Activated T-helper 2 cell treated with anti-CD3 and anti-CD28 coated beads, Interferon-gamma antibody, Interleukin-2, Interleukin-4, amounts not matched to agents 10 μg/mL and 5 μg/mL and 100 μg/mL, durations not matched to agents 14 hours and 24 hours and 36 hours (primary cell): ENCODE measurements at regions of chrX and their contacts with region 1.

Region 1: GRCh38 chrX:119118780-119119395 is 8.7 kb downstream of the KIAA1210 start:
- DNase-seq: peak; percentile 17
- H3K4me3 Mint-ChIP-seq: no peak overlapping the region
- H3K27ac Mint-ChIP-seq: no peak overlapping the region
- H3K4me1 Mint-ChIP-seq: no peaks in the 10 kb centered on the region
- H3K27me3 Mint-ChIP-seq: no peaks in the 10 kb centered on the region

Region 2: DNA sequence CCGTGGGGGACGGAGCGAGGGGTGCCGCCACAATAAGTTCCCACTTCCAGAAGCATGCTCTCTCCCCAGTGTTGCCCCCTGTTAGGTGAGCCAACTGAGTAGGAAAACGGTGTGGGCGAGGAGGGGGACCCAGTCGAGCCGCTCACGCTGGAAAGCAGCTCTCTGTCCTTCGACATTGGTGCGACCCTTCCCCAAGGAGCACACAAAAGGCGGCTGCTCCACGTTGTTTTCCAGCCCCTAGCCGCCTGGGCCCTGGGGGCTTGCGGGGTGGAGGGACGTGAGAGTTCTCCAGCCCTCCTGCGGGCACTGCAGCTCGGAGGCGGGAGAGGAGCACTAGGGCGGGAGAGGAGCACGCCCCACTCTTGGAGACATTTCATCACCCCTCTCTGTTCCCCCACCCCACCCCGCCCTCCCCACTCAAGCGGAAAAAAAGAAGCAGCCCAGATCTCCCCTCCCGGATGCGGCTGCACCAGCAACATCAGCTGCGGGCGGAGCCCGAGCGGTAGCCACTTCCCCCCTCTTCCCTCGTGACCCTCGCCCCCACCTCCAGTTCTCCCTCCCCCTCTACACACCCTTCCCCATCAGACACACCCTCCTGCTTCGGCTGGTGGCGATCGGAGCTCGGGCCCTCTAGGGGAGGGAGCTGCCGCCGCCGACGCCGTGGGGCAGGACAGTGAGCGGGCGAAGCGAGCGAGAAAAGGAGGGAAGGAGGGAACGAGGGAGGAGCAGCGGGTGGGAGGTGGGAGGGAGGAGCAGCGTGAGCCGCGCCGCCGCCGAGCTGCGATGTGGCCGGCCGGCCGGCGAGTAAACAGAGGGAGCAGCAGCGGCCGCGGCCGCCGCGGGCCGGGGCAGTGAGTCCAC is 623.6 kb before region 1 on chrX and contains the start of gene DOCK11:
- intact Hi-C with region 1: no loop called
- DNase-seq: peak; percentile 77
- H3K4me3 Mint-ChIP-seq: peak within 1 kb of the TSS; percentile 97
- H3K27ac Mint-ChIP-seq: peak within 1 kb of the TSS; percentile 97
- H3K4me1 Mint-ChIP-seq: peaks cover 26% of the 10 kb centered on the region
- H3K27me3 Mint-ChIP-seq: no peaks in the 10 kb centered on the region
- total RNA-seq, gene DOCK11: 29.9 and 31.8 TPM in 2 replicates

Region 3: DNA sequence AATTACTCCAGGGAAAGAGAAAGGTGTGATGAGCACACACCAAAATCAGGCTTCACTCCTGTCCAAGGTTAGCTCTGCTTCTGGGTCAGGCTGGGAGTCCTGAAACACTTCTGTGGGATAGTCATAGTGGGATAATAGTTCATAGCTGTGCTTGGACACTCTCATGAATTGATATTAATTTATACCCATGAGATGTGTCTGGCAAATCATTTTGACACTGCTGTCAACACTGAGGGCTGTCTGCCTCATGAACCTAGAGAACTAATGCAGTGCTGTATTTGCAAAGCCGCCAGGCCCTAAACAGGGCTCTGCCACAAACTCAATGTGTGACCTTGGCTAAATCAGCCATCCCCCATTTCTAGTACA is 92.7 kb after region 1 on chrX:
- intact Hi-C with region 1: loop called (anchors 5 kb)
- DNase-seq: no peak
- H3K4me3 Mint-ChIP-seq: no peak overlapping the region
- H3K27ac Mint-ChIP-seq: no peak overlapping the region
- H3K4me1 Mint-ChIP-seq: no peaks in the 10 kb centered on the region
- H3K27me3 Mint-ChIP-seq: peaks cover 12% of the 10 kb centered on the region

Region 4: GRCh38 chrX:119266364-119266995 is 147.6 kb after region 1 on chrX:
- intact Hi-C with region 1: loop called (anchors 1 kb)
- DNase-seq: no peak
- H3K4me3 Mint-ChIP-seq: no peak overlapping the region
- H3K27ac Mint-ChIP-seq: no peak overlapping the region
- H3K4me1 Mint-ChIP-seq: no peaks in the 10 kb centered on the region
- H3K27me3 Mint-ChIP-seq: peaks cover 26% of the 10 kb centered on the region